ENCODE measurements at regions of chr4 and their contacts with region 1.

Region 1: GRCh38 chr4:158722917-158723793 is at the start of gene PPID:
- DNase-seq: peak; percentile 64 to 93 (median 86)

Region 2: DNA sequence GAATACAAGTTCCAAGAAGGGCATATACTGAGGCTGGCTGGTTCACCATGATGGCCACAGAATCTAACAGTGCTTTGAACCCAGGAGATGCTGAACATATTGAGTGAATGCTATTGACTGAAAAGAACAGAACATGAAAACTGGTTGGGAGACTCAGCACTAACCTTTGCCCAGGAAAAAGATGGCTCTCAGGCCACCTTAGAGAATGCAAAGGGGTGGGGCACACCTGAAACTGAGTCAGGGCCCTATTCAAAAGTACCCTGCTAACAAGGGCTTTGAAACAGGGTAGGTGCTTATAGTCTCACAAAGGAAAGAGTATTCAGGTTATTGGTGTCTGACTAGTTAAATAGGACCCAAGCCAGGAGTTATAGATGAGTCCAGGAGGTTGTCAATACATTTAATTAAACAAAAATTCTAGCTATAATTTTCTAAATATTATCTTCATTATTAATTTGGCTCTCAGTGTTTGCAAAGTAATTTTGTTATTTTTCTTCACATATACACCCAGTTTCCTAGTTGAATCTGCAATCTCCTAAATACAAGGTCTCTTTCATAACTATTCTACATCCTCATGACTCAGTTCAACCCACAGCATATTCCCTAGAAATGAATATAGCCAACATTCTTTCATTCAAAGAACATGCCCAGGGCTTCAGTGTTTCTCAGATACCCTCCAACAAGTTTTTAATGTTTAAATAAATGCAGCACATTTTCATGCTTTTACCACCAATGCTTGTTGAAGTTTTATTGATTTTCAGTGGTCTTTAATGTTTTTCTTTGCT is 235.5 kb after region 1 on chr4:
- intact Hi-C with region 1: no loop called
- DNase-seq: no peak

Region 3: DNA sequence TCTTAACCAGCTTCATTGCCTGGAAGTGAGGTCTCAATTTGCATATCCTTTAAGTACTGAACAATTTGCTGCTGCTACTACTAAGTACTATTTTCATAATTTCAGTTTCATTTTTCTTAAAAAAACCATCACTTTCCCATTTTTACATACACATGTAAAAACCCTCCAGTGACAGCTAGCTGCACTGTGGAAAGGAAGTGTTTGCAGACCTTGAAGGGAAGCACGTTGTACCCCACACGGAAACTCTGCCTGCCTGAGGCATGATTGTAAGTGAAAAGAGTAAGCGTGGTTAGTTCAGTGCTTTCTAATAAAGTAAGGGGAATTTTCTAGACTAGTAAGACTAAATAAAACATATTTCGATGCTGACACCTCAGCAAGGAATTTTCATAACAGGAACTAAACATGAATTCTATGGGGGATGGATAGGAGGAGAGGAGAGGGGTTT is 483.3 kb after region 1 on chr4:
- intact Hi-C with region 1: loop called (anchors 10 kb)
- DNase-seq: no peak

Measured in head of caudate nucleus (tissue), 42 donors.